ENCODE measurements at regions of chr6 and their contacts with region 1.

Region 1: GRCh38 chr6:31958741-31959739 is at the starts of genes NELFE and SKIC2:
- DNase-seq: peak; percentile 94 to 99 (median 98)
- ATAC-seq: peak; percentile 98
- H3K4me3 ChIP-seq: peak within 1 kb of the TSS; percentile 89
- H3K4me3 Mint-ChIP-seq: peak within 1 kb of the TSS; percentile 91 to 100 (median 97)
- H3K27ac ChIP-seq: peak within 1 kb of the TSS; percentile 99
- H3K27ac Mint-ChIP-seq: peak within 1 kb of the TSS; percentile 91 to 99 (median 97)
- H3K4me1 ChIP-seq: peaks cover 18 to 20% of the 10 kb centered on the region in 2 donors
- H3K4me1 Mint-ChIP-seq: peaks cover 23 to 50% (median 39%) of the 10 kb centered on the region in 7 donors
- H3K27me3 ChIP-seq: no peaks in the 10 kb centered on the region
- H3K27me3 Mint-ChIP-seq: no peaks in the 10 kb centered on the region
- total RNA-seq, gene NELFE: 47.5 to 71.7 (median 59.1) TPM
- total RNA-seq, gene SKIC2: 85.6 to 139 (median 101) TPM

Region 2: DNA sequence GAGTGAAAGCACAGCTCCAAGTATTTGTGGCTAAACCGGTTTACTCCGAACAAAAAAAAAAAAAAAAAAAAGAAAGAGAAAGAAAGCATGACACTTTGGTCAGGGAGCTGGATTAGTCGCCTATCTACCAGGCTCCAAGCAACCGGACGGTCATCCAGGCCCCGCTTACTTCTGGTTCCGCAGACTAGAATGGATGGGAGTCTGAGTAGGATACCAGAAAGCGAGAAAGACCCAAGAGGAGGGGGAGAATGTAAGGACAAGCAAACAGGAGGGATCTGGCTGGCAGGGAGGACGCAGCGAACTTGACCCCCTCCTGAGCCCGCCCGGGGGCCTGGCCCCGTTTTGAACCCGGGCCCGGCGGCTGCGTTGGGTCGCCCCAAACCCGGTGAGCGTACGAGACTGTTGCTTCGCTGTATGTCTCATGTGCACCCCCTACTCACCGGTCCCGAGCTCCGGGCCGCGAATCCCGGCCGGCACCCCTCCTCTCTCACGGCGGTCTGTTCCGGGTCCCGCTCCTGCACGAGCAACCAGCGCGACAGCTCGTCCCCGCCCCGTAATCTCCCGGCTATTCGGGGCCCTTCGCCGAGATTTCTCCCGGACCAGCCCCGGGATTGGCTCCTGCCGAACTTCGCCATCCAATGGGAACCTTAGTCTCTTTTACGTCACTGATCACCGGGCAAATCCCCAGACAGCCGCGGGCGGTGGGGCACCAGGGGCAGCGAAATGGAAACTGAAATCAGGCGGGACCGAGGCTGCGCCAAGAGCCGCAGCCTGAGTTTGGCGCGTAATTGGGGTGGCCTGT is 1746.0 kb before region 1 on chr6 and contains the start of gene TRIM26:
- CTCF ChIA-PET with region 1: no interaction called
- POLR2A ChIA-PET with region 1: no interaction called
- intact Hi-C with region 1: loop called in 1 of 2 experiments (anchors 5 kb)
- DNase-seq: peak; percentile 88 to 99 (median 97)
- ATAC-seq: peak; percentile 94
- H3K4me3 ChIP-seq: peak within 1 kb of the TSS; percentile 83
- H3K4me3 Mint-ChIP-seq: peak within 1 kb of the TSS; percentile 89 to 100 (median 96)
- H3K27ac ChIP-seq: peak within 1 kb of the TSS; percentile 99
- H3K27ac Mint-ChIP-seq: peak within 1 kb of the TSS; percentile 96 to 100 (median 99)
- H3K4me1 ChIP-seq: peaks cover 32 to 39% of the 10 kb centered on the region in 2 donors
- H3K4me1 Mint-ChIP-seq: peaks cover 47 to 62% (median 52%) of the 10 kb centered on the region in 7 donors
- H3K27me3 ChIP-seq: no peaks in the 10 kb centered on the region
- H3K27me3 Mint-ChIP-seq: peaks cover 0 to 5% (median 0%) of the 10 kb centered on the region in 5 donors
- total RNA-seq, gene TRIM26: 40.1 to 73.1 (median 49.1) TPM

Region 3: GRCh38 chr6:31299511-31299910 is 659.5 kb before region 1 on chr6:
- CTCF ChIA-PET with region 1: no interaction called
- POLR2A ChIA-PET with region 1: no interaction called
- intact Hi-C with region 1: no loop called
- DNase-seq: no peak
- ATAC-seq: no peak
- H3K4me3 ChIP-seq: no peak overlapping the region
- H3K4me3 Mint-ChIP-seq: no peak overlapping the region
- H3K27ac ChIP-seq: no peak overlapping the region
- H3K27ac Mint-ChIP-seq: no peak overlapping the region
- H3K4me1 ChIP-seq: no peaks in the 10 kb centered on the region
- H3K4me1 Mint-ChIP-seq: no peaks in the 10 kb centered on the region
- H3K27me3 ChIP-seq: no peaks in the 10 kb centered on the region
- H3K27me3 Mint-ChIP-seq: peaks cover 0 to 64% (median 25%) of the 10 kb centered on the region in 5 donors

Region 4: DNA sequence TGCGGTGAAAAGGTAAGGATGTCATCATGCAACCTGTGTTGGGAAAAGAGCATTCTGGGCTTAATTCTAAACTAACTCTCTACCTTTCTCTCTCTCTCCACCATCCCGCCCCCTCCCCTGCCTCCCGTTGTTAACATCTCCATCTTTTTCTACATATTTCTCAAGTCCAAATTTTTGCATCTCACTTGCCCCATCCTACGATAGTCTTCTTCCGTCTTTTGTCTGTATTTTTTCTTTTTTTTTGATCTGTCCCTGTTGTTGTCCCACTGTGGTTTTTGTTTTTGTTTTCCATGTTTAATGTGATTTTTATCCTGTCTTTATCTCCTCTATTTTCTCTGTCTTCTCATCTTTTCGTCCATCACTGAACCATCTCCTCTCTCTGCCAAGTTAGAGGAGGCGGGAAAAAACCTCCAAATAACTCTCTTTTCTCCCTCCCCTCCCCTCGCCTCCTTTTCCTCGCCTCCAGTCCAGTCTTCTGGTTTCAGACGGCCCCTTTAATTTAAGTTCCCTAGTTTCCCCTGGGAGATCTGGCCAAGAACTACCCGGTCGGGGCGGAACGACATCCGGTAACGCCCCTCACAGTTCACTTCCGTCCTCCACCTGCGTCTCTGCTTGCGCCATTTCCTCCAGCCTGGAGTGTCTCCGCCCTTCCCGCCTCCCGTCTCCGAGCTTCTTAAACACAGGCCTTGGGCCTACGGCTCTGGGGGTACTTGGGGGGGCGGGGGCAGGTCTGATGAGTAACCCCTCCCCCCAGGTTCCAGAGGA is 411.9 kb before region 1 on chr6 and contains the start of gene NFKBIL1:
- CTCF ChIA-PET with region 1: no interaction called
- POLR2A ChIA-PET with region 1: interaction called, 5 read pairs
- intact Hi-C with region 1: loop called (anchors 1 to 2 kb)
- DNase-seq: peak; percentile 53 to 90 (median 84)
- ATAC-seq: peak; percentile 91
- H3K4me3 ChIP-seq: peak within 1 kb of the TSS; percentile 68
- H3K4me3 Mint-ChIP-seq: peak within 1 kb of the TSS; percentile 81 to 97 (median 91)
- H3K27ac ChIP-seq: peak within 1 kb of the TSS; percentile 89
- H3K27ac Mint-ChIP-seq: peak within 1 kb of the TSS; percentile 78 to 98 (median 95)
- H3K4me1 ChIP-seq: peaks cover 22 to 31% of the 10 kb centered on the region in 2 donors
- H3K4me1 Mint-ChIP-seq: peaks cover 22 to 57% (median 48%) of the 10 kb centered on the region in 7 donors
- H3K27me3 ChIP-seq: no peaks in the 10 kb centered on the region
- H3K27me3 Mint-ChIP-seq: no peaks in the 10 kb centered on the region
- total RNA-seq, gene NFKBIL1: 8.7 to 17.2 (median 11.6) TPM

Region 5: DNA sequence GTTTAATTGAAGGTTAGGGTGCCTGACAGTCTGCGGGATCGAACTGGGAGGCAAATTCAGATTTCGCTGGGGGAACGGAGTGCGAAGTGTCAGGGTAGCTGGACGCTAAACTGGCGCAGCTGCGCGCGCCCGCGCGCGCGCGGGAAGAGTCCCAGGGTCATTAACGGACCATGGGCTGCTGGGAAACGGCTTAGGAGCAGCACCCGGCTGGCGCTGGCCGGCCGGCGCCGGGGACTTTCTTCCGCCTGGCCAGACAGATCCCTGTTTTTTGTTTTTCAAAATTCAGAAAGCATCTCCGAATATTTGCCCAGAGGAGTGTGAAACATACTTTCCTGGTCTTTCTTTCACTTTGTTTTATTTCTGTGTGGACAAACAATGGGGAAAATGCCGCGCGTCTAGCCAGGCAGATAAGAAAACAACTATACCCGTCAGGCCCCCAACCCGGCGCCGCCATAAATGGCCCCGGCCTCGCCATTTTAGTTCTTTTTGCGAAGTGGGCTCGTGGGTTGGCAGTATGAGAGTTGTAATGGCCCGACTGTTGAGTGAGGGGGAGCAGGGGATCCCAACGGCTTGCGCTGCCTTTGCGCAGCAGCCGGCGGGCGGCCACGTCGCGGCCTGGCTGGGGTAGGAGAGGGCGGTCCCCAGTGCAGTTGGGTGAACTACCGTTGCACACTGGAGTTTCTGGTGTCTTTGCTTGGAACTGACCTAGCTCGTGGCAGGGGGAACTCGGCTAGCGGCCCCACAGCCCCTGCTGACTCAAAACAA is 124.4 kb before region 1 on chr6:
- CTCF ChIA-PET with region 1: no interaction called
- POLR2A ChIA-PET with region 1: interaction called, 4 read pairs
- intact Hi-C with region 1: loop called (anchors 1 to 5 kb)
- DNase-seq: peak; percentile 77 to 84 (median 82)
- ATAC-seq: peak; percentile 82
- H3K4me3 ChIP-seq: peak overlapping the region; percentile 73
- H3K4me3 Mint-ChIP-seq: peak overlapping the region; percentile 84 to 99 (median 99)
- H3K27ac ChIP-seq: peak overlapping the region; percentile 92
- H3K27ac Mint-ChIP-seq: peak overlapping the region; percentile 91 to 100 (median 99)
- H3K4me1 ChIP-seq: peaks cover 40 to 48% of the 10 kb centered on the region in 2 donors
- H3K4me1 Mint-ChIP-seq: peaks cover 31 to 64% (median 53%) of the 10 kb centered on the region in 7 donors
- H3K27me3 ChIP-seq: no peaks in the 10 kb centered on the region
- H3K27me3 Mint-ChIP-seq: no peaks in the 10 kb centered on the region

Region 6: DNA sequence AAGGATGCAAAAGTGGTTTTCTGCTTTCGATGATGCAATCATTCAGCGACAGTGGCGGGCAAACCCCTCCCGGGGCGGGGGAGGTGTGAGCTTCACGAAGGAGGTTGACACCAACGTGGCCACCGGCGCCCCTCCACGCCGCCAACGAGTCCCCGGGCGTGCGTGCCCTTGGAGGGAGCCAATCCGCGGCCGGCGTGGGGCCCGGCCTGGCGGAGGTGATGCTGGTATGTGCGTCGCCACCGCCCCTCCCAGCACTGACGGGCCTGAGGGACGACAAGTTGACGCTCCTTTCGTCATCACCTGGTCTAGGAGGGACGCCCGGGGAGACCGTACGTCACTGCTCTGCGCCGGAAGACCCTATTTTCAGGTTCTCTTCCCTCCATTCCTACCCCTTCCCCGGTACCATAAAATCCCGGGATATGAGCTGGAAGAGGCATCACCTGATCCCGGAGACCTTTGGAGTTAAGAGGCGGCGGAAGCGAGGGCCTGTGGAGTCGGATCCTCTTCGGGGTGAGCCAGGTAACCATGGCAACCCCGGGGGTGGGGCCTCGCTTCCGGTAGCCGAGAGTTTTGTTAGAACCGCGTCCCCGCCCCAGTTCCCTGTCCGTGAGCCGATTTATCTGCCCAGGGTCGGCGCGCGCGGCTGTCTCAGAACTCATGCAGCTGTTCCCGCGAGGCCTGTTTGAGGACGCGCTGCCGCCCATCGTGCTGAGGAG is 13.1 kb after region 1 on chr6 and contains the start of gene DXO:
- CTCF ChIA-PET with region 1: interaction called, 10 read pairs
- POLR2A ChIA-PET with region 1: interaction called, 108 read pairs
- intact Hi-C with region 1: loop called (anchors 1 kb)
- DNase-seq: peak; percentile 95 to 100 (median 99)
- ATAC-seq: peak; percentile 94
- H3K4me3 ChIP-seq: peak within 1 kb of the TSS; percentile 90
- H3K4me3 Mint-ChIP-seq: peak within 1 kb of the TSS; percentile 86 to 99 (median 99)
- H3K27ac ChIP-seq: peak within 1 kb of the TSS; percentile 97
- H3K27ac Mint-ChIP-seq: peak within 1 kb of the TSS; percentile 97 to 100 (median 100)
- H3K4me1 ChIP-seq: peaks cover 21 to 22% of the 10 kb centered on the region in 2 donors
- H3K4me1 Mint-ChIP-seq: peaks cover 20 to 51% (median 42%) of the 10 kb centered on the region in 7 donors
- H3K27me3 ChIP-seq: no peaks in the 10 kb centered on the region
- H3K27me3 Mint-ChIP-seq: peaks cover 0 to 5% (median 0%) of the 10 kb centered on the region in 5 donors
- total RNA-seq, gene DXO: 19.3 to 44.3 (median 35.0) TPM

Region 7: GRCh38 chr6:32177788-32178546 is 218.9 kb after region 1 on chr6 and contains the start of gene RNF5:
- CTCF ChIA-PET with region 1: no interaction called
- POLR2A ChIA-PET with region 1: no interaction called
- intact Hi-C with region 1: loop called (anchors 2 to 5 kb)
- DNase-seq: peak; percentile 60 to 99 (median 97)
- ATAC-seq: peak; percentile 89
- H3K4me3 ChIP-seq: peak within 1 kb of the TSS; percentile 82
- H3K4me3 Mint-ChIP-seq: peak within 1 kb of the TSS; percentile 85 to 98 (median 95)
- H3K27ac ChIP-seq: peak within 1 kb of the TSS; percentile 91
- H3K27ac Mint-ChIP-seq: peak within 1 kb of the TSS; percentile 87 to 100 (median 95)
- H3K4me1 ChIP-seq: peaks cover 31 to 63% of the 10 kb centered on the region in 2 donors
- H3K4me1 Mint-ChIP-seq: peaks cover 63 to 86% (median 69%) of the 10 kb centered on the region in 7 donors
- H3K27me3 ChIP-seq: no peaks in the 10 kb centered on the region
- H3K27me3 Mint-ChIP-seq: no peaks in the 10 kb centered on the region
- total RNA-seq, gene RNF5: 17.0 to 50.6 (median 40.9) TPM

Measured in naive thymus-derived CD4-positive, alpha-beta T cell (primary cell).